Tibial artery (tissue), 4 donors: ENCODE measurements at regions of chr19 and their contacts with region 1.

Region 1: DNA sequence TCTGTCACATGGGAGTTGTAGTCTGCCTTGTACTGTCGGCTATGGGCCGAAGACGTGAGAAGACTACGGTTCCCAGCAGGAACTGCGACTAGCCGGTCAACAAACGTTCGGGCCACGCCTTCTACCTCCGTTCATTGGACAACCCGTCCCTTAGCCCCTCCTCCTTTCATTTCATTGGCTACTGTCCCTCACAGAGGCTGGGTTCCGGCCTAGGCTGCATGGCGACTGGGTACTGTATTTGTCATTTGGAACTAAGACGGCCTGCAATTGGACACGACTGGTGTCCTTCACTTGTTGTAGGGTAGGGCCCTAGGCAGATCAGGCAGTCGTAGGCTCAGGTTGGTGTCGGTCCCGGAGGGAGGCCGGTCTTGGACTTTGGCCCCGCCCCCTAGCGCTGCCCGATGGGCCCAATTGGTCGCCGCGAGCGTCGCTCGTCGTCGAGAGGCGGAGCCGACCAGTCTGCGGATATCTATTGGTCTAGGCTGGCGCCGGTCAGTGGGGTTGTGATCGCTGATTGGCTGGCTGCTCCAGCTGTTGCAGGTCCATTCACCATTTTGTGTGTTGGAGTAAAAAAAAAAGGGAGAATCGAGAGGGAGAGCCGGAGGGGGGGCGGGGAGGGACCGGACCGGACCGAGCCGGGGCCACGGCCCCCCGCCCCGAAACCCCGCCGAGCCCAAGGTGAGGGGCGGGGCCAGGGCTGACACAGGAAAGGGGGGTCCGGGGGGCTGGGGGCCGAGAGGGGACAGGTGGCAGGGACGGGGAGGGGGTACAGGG is at the start of gene CIC:
- DNase-seq: peak; percentile 100
- H3K4me3 ChIP-seq: peak within 1 kb of the TSS; percentile 70 to 75
- H3K27ac ChIP-seq: peak within 1 kb of the TSS; percentile 96 to 99
- H3K4me1 ChIP-seq: peaks cover 0 to 50% (median 32%) of the 10 kb centered on the region in 4 donors
- H3K27me3 ChIP-seq: no peaks in the 10 kb centered on the region
- CTCF ChIP-seq: peak in 1 of 2 experiments; percentile 2

Region 2: GRCh38 chr19:42254989-42255765 is 13.7 kb before region 1 on chr19 and contains the start of gene ERF:
- intact Hi-C with region 1: loop called (anchors 1 kb)
- DNase-seq: peak; percentile 94 to 97
- H3K4me3 ChIP-seq: peak within 1 kb of the TSS; percentile 85 to 97
- H3K27ac ChIP-seq: peak within 1 kb of the TSS; percentile 99
- H3K4me1 ChIP-seq: peaks cover 0 to 42% (median 38%) of the 10 kb centered on the region in 4 donors
- H3K27me3 ChIP-seq: no peaks in the 10 kb centered on the region
- CTCF ChIP-seq: peak in 1 of 2 experiments; percentile 11